ENCODE measurements at regions of chrX and their contacts with region 1.

Region 1: DNA sequence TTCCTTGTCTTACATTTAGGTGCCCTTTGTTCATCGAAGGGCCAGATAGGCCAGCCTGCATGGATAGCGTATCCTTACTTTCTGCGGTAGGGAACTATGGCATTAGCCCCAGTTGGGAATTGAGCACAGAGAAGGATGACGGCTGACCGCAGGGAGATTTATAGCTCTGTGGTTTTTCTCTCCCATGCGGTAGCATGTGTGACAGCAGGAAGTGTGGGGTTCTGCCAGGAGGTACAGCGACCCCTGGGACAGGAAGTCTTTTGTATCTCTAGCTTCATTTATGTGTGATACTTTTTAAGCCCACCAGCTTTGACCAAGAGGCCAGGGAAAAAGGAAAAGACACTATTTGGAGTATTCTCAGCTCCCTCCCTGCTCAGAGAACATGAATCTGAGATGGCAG is 33.1 kb downstream of the GAB3 start:
- DNase-seq: peak; percentile 87 to 94 (median 93)
- H3K4me3 ChIP-seq: peak overlapping the region in 5 of 7 experiments; percentile 6 to 55 (median 20)
- H3K27ac ChIP-seq: peak overlapping the region; percentile 49 to 76
- H3K4me1 ChIP-seq: peaks cover 37 to 73% (median 46%) of the 10 kb centered on the region in 4 experiments
- H3K27me3 ChIP-seq: no peaks in the 10 kb centered on the region

Region 2: DNA sequence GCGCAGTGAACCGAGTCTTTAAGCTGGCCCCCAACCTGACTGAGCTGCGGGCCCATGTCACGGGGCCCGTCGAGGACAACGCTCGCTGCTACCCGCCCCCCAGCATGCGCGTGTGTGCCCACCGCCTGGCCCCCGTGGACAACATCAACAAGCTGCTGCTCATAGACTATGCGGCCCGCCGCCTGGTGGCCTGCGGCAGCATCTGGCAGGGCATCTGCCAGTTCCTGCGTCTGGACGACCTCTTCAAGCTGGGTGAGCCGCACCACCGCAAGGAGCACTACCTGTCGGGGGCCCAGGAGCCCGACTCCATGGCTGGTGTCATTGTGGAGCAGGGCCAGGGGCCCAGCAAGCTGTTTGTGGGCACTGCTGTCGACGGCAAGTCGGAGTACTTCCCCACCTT is 257.5 kb before region 1 on chrX:
- CTCF ChIA-PET with region 1: no interaction called
- POLR2A ChIA-PET with region 1: no interaction called
- DNase-seq: no peak
- H3K4me3 ChIP-seq: no peak overlapping the region
- H3K27ac ChIP-seq: no peak overlapping the region
- H3K4me1 ChIP-seq: peaks cover 0 to 7% (median 2%) of the 10 kb centered on the region in 4 experiments
- H3K27me3 ChIP-seq: peaks cover 0 to 11% (median 0%) of the 10 kb centered on the region in 5 experiments

Region 3: DNA sequence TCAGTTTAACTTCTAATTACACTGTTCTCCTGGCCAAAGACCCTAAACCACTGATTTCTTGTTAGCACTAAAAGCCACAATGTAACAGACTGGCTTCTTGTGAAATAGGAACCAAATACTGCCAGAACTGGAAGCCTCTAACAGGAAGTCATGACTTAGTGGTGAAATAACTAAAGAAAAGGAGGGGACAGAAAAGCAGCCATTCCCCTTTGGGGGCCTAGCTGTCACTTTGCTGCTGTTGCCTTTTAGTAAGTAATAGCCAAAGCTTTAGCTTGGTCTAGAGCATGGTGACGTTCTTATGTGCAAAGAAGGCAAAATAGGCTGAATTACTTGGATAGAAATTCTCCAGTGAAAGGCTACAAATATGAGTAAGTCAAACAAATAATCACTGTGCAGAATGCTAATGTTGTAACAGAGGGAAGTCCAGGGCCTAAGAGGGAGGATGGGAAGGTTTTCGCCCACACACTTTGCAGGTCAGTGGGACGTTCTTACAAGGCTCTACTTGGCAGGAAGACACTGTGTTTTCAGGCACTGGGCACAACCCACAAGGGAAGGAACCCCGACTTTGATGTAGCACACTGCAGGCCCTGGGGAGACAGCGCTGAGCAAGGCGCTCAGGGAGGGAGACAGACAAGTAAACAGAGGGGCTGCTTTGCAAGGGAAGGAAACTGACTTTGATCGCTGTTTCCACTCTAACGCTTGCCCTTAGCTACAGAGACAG is 16.4 kb after region 1 on chrX:
- CTCF ChIA-PET with region 1: interaction called, 51 read pairs
- POLR2A ChIA-PET with region 1: interaction called, 3 read pairs
- DNase-seq: peak in 2 of 3 donors; percentile 75 to 83
- H3K4me3 ChIP-seq: peak overlapping the region in 4 of 7 experiments; percentile 5 to 50 (median 44)
- H3K27ac ChIP-seq: peak overlapping the region; percentile 2 to 76
- H3K4me1 ChIP-seq: peaks cover 67 to 100% (median 81%) of the 10 kb centered on the region in 4 experiments
- H3K27me3 ChIP-seq: peaks cover 0 to 5% (median 0%) of the 10 kb centered on the region in 5 experiments